Right ventricle myocardium superior (tissue), 1 donor: ENCODE measurements at regions of chr12 and their contacts with region 1.

Region 1: GRCh38 chr12:57904848-57905811 is 36.2 kb upstream of the ATP23 start:
- DNase-seq: peak; percentile 86
- ATAC-seq: peak; percentile 97

Region 2: DNA sequence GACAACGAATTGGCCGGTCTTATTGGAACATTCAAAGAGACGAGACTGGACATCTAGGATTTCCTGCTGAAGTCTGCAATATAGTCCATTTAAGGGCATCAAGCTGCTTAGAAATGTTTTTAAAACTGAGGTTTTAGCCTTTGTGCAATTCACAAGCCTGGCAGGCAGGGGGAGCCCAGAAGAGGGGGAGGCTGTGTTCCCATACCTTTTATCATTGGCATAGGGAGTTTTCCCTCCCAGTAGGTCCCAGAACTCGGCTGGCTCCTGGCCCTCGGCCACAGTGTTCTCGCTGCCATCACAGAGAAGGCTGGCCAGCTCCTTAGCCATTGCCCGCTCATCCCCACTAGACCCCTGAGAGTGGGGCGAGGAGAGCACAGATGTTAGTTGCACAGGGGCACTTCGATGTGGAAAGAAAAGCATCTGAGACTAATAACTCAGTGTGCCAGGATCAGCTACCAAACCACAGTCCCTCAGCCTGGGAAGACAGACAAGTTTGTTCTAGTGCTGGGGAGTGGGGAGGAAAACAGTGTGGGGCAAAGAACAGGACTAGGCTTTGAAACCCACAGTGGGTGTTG is 101.7 kb before region 1 on chr12:
- intact Hi-C with region 1: loop called (anchors 10 kb)
- DNase-seq: peak; percentile 69
- ATAC-seq: peak; percentile 86

Region 3: GRCh38 chr12:57832966-57833365 is 72.2 kb before region 1 on chr12:
- intact Hi-C with region 1: loop called (anchors 2 kb)
- DNase-seq: no peak
- ATAC-seq: no peak